ENCODE measurements at regions of chr15 and their contacts with region 1.

Region 1: DNA sequence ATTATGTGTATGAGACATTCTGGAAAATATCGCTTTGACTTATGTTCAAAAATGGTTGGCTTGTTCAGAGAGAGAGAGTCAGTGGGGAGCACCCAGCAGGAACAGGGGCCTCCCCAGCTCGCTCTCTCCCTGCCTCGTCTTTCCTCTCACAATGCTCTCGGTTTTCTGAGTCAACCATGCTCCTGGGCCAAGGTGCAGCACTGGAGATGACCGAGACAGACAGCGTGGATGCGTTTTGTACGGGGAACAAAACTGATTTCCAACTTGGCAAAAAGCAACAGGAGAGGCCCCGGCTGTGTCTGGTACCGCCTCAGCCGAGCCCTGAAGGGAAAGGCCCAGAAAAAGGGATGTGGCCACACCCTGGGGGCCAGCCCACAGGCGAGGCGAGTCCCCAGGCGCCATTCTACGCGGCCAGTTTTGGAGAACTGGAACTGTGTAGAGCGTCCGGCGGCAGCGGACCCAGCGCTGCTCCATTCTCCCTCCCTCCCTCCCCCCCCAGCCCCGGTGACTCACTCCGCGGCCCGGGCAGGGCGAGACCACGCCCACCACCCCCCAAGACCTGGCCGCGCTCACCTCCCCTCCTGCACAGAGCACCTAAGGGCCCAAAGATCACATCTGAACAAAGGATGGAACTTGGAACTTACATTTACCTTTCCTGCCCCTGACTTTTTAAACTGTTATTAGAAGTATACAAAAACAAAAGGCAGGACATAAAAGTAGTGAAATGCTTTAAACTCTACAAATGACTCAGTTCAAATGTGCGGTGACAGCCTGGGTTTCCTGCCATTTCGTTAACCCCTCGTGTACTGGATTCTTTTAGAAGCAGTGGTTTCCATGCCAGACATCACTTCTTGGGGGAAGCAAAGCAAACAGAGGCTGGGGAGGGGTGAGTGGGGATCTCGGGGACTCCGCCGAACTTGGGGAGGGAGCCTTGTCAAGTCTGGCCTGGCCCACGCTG is 12.7 kb downstream of the ATP10A start:
- DNase-seq: peak; percentile 87
- ATAC-seq: peak; percentile 79
- H3K4me3 Mint-ChIP-seq: peak overlapping the region; percentile 76
- H3K27ac Mint-ChIP-seq: peak overlapping the region; percentile 100
- H3K4me1 Mint-ChIP-seq: peaks cover 92% of the 10 kb centered on the region
- H3K27me3 Mint-ChIP-seq: no peaks in the 10 kb centered on the region

Region 2: DNA sequence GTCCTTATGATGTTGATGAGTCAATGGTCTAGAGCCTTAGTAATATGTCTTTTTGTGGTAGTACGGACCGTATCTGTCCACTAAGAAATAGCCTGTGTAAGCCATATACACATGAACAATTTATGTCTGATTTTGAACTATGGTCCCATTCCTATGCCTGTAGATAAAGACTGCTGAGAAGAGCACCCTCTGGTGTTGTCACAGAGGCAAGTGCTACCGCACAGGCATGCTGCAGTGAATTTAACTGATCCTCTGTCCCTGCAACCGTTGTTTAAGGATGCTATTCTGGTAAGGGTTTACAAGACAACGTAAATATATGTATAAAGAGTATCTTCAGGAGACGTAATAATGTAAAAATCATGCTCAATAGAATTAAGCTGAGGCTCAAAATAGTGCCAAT is 582.3 kb before region 1 on chr15:
- CTCF ChIA-PET with region 1: no interaction called
- POLR2A ChIA-PET with region 1: no interaction called
- intact Hi-C with region 1: no loop called
- DNase-seq: no peak
- ATAC-seq: no peak
- H3K4me3 Mint-ChIP-seq: no peak overlapping the region
- H3K27ac Mint-ChIP-seq: no peak overlapping the region
- H3K4me1 Mint-ChIP-seq: no peaks in the 10 kb centered on the region
- H3K27me3 Mint-ChIP-seq: no peaks in the 10 kb centered on the region

Region 3: DNA sequence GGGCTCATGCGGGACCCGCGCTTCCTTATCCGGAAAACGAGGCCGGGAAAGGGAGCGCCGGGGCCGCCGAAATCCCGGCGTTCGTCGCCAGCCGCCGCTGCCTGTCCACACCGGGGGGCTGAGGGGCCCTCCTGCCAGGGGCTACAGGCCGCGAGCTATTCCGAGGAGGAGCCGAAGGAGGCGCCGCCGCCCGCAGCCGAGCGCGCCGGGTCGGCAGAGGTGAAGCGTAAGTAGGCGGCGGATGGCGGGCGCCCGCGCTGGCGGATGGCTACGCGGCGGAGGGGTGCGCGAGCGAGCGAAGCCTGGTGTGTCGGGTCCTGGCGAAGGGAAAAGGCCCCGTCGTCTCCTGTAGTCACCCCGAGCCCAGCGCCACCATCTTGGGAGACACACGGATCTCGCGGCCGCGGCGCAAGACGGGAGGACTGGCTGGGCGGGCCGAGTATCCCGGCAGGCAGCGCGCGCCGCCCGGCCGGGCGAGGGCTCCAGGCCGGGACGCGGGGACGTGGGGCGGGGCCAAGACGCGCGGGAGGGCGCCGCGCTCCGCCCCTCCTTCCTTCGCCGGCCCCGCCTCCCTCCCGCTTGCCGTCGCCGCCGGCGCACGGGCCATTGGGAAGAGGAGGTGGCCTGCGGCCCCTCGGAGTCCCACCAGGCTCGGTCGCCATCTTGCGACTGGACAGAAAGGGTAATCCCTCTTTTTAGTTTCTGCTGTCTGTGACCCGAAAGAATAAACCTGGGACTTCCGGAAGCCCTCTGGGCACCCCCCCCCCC is 411.6 kb before region 1 on chr15 and contains the start of gene UBE3A:
- CTCF ChIA-PET with region 1: no interaction called
- POLR2A ChIA-PET with region 1: no interaction called
- intact Hi-C with region 1: loop called (anchors 2 to 5 kb)
- DNase-seq: peak; percentile 94
- ATAC-seq: peak; percentile 94
- H3K4me3 Mint-ChIP-seq: peak within 1 kb of the TSS; percentile 90
- H3K27ac Mint-ChIP-seq: peak within 1 kb of the TSS; percentile 94
- H3K4me1 Mint-ChIP-seq: peaks cover 30% of the 10 kb centered on the region
- H3K27me3 Mint-ChIP-seq: no peaks in the 10 kb centered on the region
- total RNA-seq, gene UBE3A: 101 to 139 TPM

Region 4: GRCh38 chr15:25811481-25811906 is 38.9 kb before region 1 on chr15:
- CTCF ChIA-PET with region 1: interaction called, 6 read pairs
- POLR2A ChIA-PET with region 1: no interaction called
- intact Hi-C with region 1: loop called (anchors 2 kb)
- DNase-seq: no peak
- ATAC-seq: peak; percentile 30
- H3K4me3 Mint-ChIP-seq: peak overlapping the region; percentile 16
- H3K27ac Mint-ChIP-seq: peak overlapping the region; percentile 81
- H3K4me1 Mint-ChIP-seq: peaks cover 62% of the 10 kb centered on the region
- H3K27me3 Mint-ChIP-seq: no peaks in the 10 kb centered on the region

Region 5: DNA sequence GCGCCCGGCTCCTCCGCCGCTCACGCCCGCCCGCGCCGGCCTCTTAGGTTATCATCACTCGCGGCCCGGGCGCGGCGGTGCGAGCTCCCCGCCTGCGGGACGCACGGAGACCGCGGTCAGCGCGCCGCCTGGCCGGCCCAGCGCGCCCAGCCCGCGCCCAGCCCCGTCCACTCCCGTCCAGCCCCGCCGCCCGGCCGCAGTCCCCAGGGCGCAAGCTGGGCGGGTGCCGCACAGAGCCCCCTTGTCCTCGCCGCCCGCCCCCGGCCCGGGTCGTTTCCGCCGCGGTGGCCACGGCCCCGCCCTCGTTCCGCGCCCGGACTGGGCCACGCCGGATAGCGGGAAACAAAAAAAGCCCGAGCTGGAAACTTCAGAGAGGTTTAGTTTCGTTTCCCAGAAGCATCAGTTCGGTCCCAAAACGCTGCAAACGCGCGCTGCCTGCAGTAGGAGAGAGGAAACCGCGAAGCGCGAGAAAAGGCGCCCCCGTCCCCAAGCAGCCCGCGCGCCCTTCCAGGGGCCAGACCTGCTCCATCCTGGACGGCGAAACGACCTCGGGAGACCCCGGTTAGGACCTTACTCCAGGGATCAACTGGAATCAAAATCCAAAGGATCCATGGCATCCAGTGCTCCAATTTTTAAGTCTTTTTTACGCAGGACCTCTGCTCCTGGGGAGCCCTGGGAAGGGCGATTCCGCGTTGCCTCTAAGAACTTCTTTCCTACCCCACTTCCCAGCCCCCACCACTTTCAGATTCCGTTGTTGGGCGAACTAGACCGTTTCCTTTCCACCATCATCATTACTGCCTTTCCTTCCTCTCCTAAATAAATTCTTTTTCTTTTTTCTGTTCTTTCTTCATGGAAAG is 12.9 kb after region 1 on chr15 and contains the start of gene ATP10A:
- CTCF ChIA-PET with region 1: interaction called, 3 read pairs
- POLR2A ChIA-PET with region 1: interaction called, 4 read pairs
- intact Hi-C with region 1: loop called (anchors 1 kb)
- DNase-seq: peak; percentile 72
- ATAC-seq: peak; percentile 19
- H3K4me3 Mint-ChIP-seq: peak within 1 kb of the TSS; percentile 92
- H3K27ac Mint-ChIP-seq: peak within 1 kb of the TSS; percentile 93
- H3K4me1 Mint-ChIP-seq: peaks cover 33% of the 10 kb centered on the region
- H3K27me3 Mint-ChIP-seq: no peaks in the 10 kb centered on the region
- total RNA-seq, gene ATP10A: 20.5 to 22.4 TPM

Region 6: GRCh38 chr15:26082221-26083109 is 232.0 kb after region 1 on chr15:
- CTCF ChIA-PET with region 1: no interaction called
- POLR2A ChIA-PET with region 1: no interaction called
- intact Hi-C with region 1: loop called (anchors 1 to 10 kb)
- DNase-seq: peak; percentile 97
- ATAC-seq: peak; percentile 99
- H3K4me3 Mint-ChIP-seq: peak overlapping the region; percentile 84
- H3K27ac Mint-ChIP-seq: peak overlapping the region; percentile 95
- H3K4me1 Mint-ChIP-seq: peaks cover 32% of the 10 kb centered on the region
- H3K27me3 Mint-ChIP-seq: no peaks in the 10 kb centered on the region

Region 7: DNA sequence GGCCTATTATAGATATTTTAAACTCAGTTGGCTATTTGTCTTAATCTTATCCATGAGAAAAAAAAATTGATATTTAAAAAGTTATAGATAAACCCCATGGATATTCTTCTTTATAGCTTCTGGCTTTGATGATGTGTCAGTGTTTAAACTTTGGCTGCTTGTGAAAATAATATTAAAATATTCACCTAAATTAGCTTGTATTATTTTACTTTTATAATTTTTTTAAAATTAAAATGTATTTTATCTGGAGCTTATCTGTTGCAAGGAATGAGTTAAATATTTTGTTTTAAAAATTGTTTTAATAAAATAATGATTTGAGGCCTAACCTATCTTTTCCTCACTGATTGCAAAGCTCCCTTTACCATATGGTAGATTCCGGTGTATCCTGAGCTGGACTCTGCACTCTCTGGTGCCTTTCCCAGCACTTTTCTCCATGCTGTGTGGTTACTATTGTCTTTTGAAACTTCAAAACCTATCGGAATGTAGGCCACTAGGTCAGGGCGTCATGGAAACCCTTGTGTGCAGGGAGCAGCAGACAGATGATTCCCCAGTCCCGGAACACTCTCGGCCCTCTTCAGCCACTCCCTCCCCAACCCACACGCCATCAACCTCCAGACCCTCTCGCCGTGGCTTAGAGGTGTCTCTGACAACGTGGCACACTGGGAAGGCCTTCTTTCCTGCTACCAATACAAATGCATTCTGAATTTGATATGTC is 265.0 kb after region 1 on chr15:
- CTCF ChIA-PET with region 1: no interaction called
- POLR2A ChIA-PET with region 1: no interaction called
- intact Hi-C with region 1: no loop called
- DNase-seq: no peak
- ATAC-seq: no peak
- H3K4me3 Mint-ChIP-seq: no peak overlapping the region
- H3K27ac Mint-ChIP-seq: no peak overlapping the region
- H3K4me1 Mint-ChIP-seq: no peaks in the 10 kb centered on the region
- H3K27me3 Mint-ChIP-seq: no peaks in the 10 kb centered on the region

Region 8: GRCh38 chr15:26179906-26180305 is 329.5 kb after region 1 on chr15:
- CTCF ChIA-PET with region 1: no interaction called
- POLR2A ChIA-PET with region 1: no interaction called
- intact Hi-C with region 1: no loop called
- DNase-seq: no peak
- ATAC-seq: no peak
- H3K4me3 Mint-ChIP-seq: no peak overlapping the region
- H3K27ac Mint-ChIP-seq: no peak overlapping the region
- H3K4me1 Mint-ChIP-seq: no peaks in the 10 kb centered on the region
- H3K27me3 Mint-ChIP-seq: peaks cover 4% of the 10 kb centered on the region

Region 9: DNA sequence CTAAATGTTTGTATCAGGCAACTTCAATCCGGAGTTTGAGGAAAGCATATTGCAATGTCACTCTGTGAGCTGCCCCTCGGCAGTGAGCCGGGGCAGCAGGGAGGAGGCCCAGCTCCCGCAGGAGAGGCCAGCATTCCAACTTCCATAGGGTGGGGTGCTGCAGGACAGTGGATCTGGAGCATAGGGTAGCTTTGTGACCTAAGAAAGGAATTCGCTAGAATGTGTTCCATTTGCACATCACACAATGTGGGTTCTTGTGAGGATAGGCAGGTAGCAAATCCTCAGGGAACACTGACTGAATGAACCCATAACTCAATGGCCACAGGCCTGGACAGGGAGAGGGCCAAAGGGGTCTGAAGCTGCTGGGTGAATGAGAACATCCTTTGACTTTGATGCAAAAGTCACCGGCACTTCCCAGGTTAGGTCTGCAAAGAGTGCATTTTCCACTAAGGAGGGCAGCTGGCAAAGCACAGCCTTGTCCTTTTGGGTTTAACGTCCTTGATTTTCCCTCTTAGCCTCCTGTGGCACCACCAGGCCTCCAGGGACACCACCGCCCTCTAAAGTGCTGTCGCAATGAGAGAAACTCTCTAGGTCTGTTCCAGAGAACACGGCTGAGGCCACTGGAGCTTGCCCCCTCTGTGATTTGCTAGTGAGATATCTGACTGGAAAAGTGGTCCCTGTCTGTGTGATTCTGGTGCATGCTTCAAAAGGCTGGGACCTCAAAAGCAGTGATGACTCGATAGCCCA is 886.2 kb after region 1 on chr15:
- CTCF ChIA-PET with region 1: no interaction called
- POLR2A ChIA-PET with region 1: no interaction called
- intact Hi-C with region 1: no loop called
- DNase-seq: no peak
- ATAC-seq: no peak
- H3K4me3 Mint-ChIP-seq: no peak overlapping the region
- H3K27ac Mint-ChIP-seq: no peak overlapping the region
- H3K4me1 Mint-ChIP-seq: no peaks in the 10 kb centered on the region
- H3K27me3 Mint-ChIP-seq: no peaks in the 10 kb centered on the region